Activated T-helper 1 cell treated with anti-CD3 and anti-CD28 coated beads, Interleukin-12 subunit alpha, Interleukin-12 subunit beta, Interleukin-2, Interleukin-4 antibody, amounts not matched to agents 30 ng/mL and 10 ng/mL and 1 ng/mL, durations not matched to agents 14 hours and 24 hours and 36 hours (primary cell): ENCODE measurements at regions of chr12 and their contacts with region 1.

Region 1: GRCh38 chr12:92987362-92987761 is 58.3 kb upstream of the EEA1 start:
- DNase-seq: no peak
- H3K4me3 Mint-ChIP-seq: no peak overlapping the region
- H3K27ac Mint-ChIP-seq: peak overlapping the region; percentile 79
- H3K4me1 Mint-ChIP-seq: peaks cover 30% of the 10 kb centered on the region
- H3K27me3 Mint-ChIP-seq: no peaks in the 10 kb centered on the region

Region 2: GRCh38 chr12:91382081-91382543 is 1605.2 kb before region 1 on chr12:
- intact Hi-C with region 1: loop called (anchors 2 kb)
- DNase-seq: peak; percentile 68
- H3K4me3 Mint-ChIP-seq: peak overlapping the region; percentile 76
- H3K27ac Mint-ChIP-seq: no peak overlapping the region
- H3K4me1 Mint-ChIP-seq: peaks cover 10% of the 10 kb centered on the region
- H3K27me3 Mint-ChIP-seq: peaks cover 5% of the 10 kb centered on the region

Region 3: DNA sequence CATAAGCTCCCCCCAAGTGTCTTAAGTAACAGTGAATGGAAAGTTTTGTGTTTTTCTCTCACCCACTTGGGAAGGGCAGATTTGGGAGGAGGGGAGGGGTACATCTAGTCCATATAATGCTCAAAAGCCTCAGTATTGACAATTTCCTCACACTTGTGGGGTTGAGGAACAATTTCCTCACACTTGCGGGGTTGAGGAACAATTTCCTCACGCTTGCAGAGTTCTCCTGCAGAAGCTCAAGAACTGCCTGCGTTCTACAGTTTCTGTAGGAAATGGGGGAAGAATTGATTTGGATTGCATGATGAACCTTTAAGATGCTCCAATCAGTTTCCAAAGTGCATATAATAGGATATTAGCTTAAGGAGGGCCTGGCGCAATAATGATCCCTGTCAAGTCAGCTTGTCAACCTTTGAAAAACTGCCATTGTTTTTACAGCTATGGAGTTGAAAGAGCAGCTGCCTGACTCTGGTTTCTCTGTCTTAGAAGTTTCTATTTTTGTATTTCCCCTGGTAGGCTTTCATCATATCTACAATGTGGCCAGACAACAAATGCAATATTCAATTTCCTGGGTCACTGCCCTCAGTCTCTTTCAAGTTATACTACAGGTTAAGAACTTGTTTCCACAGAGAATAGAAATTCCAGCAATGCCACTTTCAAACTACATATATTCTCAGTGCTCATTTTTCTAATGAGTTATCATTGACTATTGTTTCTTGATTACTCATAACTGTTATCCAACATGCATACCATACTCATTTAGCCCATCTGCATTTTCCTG is 218.0 kb before region 1 on chr12:
- intact Hi-C with region 1: no loop called
- DNase-seq: no peak
- H3K4me3 Mint-ChIP-seq: no peak overlapping the region
- H3K27ac Mint-ChIP-seq: no peak overlapping the region
- H3K4me1 Mint-ChIP-seq: peaks cover 11% of the 10 kb centered on the region
- H3K27me3 Mint-ChIP-seq: no peaks in the 10 kb centered on the region

Region 4: GRCh38 chr12:92827836-92828431 is 159.4 kb before region 1 on chr12:
- intact Hi-C with region 1: loop called (anchors 2 kb)
- DNase-seq: no peak
- H3K4me3 Mint-ChIP-seq: no peak overlapping the region
- H3K27ac Mint-ChIP-seq: no peak overlapping the region
- H3K4me1 Mint-ChIP-seq: no peaks in the 10 kb centered on the region
- H3K27me3 Mint-ChIP-seq: no peaks in the 10 kb centered on the region

Region 5: GRCh38 chr12:93089805-93090569 is 102.6 kb after region 1 on chr12:
- intact Hi-C with region 1: loop called (anchors 1 kb)
- DNase-seq: no peak
- H3K4me3 Mint-ChIP-seq: no peak overlapping the region
- H3K27ac Mint-ChIP-seq: peak overlapping the region; percentile 42
- H3K4me1 Mint-ChIP-seq: peaks cover 23% of the 10 kb centered on the region
- H3K27me3 Mint-ChIP-seq: no peaks in the 10 kb centered on the region

Region 6: GRCh38 chr12:93397412-93397811 is 410.1 kb after region 1 on chr12:
- intact Hi-C with region 1: loop called (anchors 1 kb)
- DNase-seq: no peak
- H3K4me3 Mint-ChIP-seq: no peak overlapping the region
- H3K27ac Mint-ChIP-seq: no peak overlapping the region
- H3K4me1 Mint-ChIP-seq: peaks cover 2% of the 10 kb centered on the region
- H3K27me3 Mint-ChIP-seq: no peaks in the 10 kb centered on the region

Region 7: GRCh38 chr12:93742110-93742934 is 755.0 kb after region 1 on chr12:
- intact Hi-C with region 1: loop called (anchors 10 kb)
- DNase-seq: peak; percentile 40
- H3K4me3 Mint-ChIP-seq: peak overlapping the region; percentile 86
- H3K27ac Mint-ChIP-seq: peak overlapping the region; percentile 86
- H3K4me1 Mint-ChIP-seq: peaks cover 50% of the 10 kb centered on the region
- H3K27me3 Mint-ChIP-seq: peaks cover 2% of the 10 kb centered on the region